ENCODE measurements at regions of chr21 and their contacts with region 1.

Region 1: GRCh38 chr21:26759671-26760070 is 85.5 kb downstream of the ADAMTS1 start:
- DNase-seq: no peak
- ATAC-seq: no peak
- H3K4me3 ChIP-seq: no peak overlapping the region
- H3K4me3 Mint-ChIP-seq: no peak overlapping the region
- H3K27ac ChIP-seq: no peak overlapping the region
- H3K27ac Mint-ChIP-seq: no peak overlapping the region
- H3K4me1 ChIP-seq: no peaks in the 10 kb centered on the region
- H3K4me1 Mint-ChIP-seq: no peaks in the 10 kb centered on the region
- H3K27me3 ChIP-seq: no peaks in the 10 kb centered on the region
- H3K27me3 Mint-ChIP-seq: no peaks in the 10 kb centered on the region
- CTCF ChIP-seq: no peak

Region 2: DNA sequence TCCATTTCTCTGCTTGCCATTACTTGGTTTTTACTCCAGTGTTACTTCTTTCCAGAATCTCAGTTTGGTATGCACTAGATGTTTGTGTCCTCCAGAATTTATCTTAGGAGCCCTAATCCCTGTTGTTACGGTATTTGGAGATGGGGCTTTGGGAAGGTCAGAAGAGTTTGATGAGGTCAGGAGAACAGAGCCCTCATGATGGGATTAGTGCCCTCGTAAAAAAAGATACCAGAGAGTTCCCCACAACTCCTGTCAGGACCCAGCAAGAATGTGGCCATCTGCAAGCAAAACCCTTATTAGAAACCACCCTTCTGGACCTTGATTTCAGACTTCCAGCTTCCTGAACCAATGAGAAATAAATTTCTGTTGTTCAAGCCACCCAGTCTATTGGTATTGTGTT is 12.5 kb before region 1 on chr21:
- CTCF ChIA-PET with region 1: no interaction called
- POLR2A ChIA-PET with region 1: no interaction called
- intact Hi-C with region 1: loop called in 1 of 2 experiments (anchors 1 kb)
- DNase-seq: no peak
- ATAC-seq: no peak
- H3K4me3 ChIP-seq: no peak overlapping the region
- H3K4me3 Mint-ChIP-seq: no peak overlapping the region
- H3K27ac ChIP-seq: no peak overlapping the region
- H3K27ac Mint-ChIP-seq: no peak overlapping the region
- H3K4me1 ChIP-seq: no peaks in the 10 kb centered on the region
- H3K4me1 Mint-ChIP-seq: no peaks in the 10 kb centered on the region
- H3K27me3 ChIP-seq: no peaks in the 10 kb centered on the region
- H3K27me3 Mint-ChIP-seq: no peaks in the 10 kb centered on the region
- CTCF ChIP-seq: no peak

Region 3: DNA sequence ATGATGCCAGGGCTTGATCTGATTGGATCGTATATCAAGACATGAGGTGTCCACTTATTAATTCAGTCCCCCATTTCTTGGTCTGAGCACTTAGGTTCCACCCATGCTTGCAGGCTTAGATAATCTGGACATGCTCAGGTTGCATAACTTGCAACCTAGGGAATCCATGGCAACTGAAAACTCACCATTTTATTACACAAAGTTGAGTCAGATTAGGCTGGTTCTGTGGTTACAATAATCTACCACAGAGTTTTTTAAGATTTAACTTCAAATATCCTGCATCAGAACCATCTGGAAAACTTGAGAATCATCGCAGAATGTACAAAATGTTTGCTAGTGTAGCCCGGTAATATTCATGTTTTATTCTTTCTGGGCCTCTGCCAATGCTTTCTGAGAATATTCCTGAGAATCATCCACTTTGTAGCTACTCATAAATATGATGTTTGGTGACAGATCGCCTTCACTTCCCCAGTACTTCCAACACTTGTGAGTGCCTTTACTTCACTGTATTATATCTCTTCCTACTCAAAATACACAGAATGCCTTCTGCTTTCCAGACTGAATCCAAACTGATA is 914.5 kb after region 1 on chr21:
- CTCF ChIA-PET with region 1: no interaction called
- POLR2A ChIA-PET with region 1: no interaction called
- intact Hi-C with region 1: no loop called
- DNase-seq: no peak
- ATAC-seq: no peak
- H3K4me3 ChIP-seq: no peak overlapping the region
- H3K4me3 Mint-ChIP-seq: no peak overlapping the region
- H3K27ac ChIP-seq: no peak overlapping the region
- H3K27ac Mint-ChIP-seq: no peak overlapping the region
- H3K4me1 ChIP-seq: no peaks in the 10 kb centered on the region
- H3K4me1 Mint-ChIP-seq: no peaks in the 10 kb centered on the region
- H3K27me3 ChIP-seq: no peaks in the 10 kb centered on the region
- H3K27me3 Mint-ChIP-seq: no peaks in the 10 kb centered on the region
- CTCF ChIP-seq: no peak

Measured in CD8-positive, alpha-beta T cell (primary cell).